ENCODE measurements at regions of chr2 and their contacts with region 1.

Region 1: GRCh38 chr2:27663463-27664249 is at the starts of genes SLC4A1AP and SUPT7L:
- DNase-seq: peak; percentile 56 to 94 (median 76)

Region 2: DNA sequence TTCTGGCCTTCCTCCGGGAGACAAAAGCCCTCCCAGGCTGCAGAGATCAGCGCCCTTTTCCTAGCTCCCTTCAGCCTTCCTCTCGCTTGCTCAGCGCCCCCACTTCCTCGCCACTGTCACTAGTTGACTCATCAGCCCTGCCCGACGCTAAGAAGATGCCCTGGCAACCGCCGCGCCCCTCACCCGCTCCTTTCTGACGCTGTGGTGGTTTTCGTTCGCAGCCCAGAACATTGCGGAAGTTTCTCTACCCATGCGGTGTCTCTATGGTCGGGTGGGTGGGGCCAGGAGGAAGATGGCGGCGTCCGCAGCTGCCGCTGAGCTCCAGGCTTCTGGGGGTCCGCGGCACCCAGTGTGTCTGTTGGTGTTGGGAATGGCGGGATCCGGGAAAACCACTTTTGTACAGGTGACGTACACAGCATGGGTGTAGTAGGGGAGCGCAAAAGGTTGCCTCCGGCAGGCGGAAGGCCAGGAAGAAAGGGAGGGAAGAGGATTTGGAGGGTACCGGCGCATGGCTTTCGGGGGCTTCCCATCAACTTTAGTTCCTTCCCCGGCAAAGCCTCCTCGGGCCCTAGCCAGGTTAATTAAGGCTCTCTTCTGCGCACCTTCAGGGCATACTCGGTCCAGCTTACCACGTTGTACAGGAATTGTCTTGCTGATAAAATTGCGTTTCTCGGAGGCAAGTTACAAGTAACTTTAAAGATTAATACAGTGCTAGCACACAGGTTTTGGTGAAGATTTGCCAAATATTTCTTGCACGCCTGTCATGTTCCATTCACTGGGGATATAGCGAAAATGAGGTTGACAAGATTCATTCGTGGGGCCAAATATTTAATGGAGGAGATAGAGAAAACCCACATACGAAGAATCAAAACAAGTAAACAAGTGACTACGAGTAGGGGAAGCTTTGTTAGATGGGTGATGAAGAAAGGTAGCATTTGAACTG is 34.6 kb before region 1 on chr2 and contains the starts of genes CCDC121 and GPN1:
- intact Hi-C with region 1: loop called (anchors 5 kb)
- DNase-seq: peak; percentile 84 to 98 (median 91)